ENCODE measurements at regions of chr2 and their contacts with region 1.

Region 1: GRCh38 chr2:173965329-173966025 is at the start of gene SP3:
- DNase-seq: peak; percentile 95
- H3K4me3 Mint-ChIP-seq: peak within 1 kb of the TSS; percentile 86
- H3K27ac Mint-ChIP-seq: peak within 1 kb of the TSS; percentile 92
- H3K4me1 Mint-ChIP-seq: peaks cover 32% of the 10 kb centered on the region
- H3K27me3 Mint-ChIP-seq: no peaks in the 10 kb centered on the region
- total RNA-seq, gene SP3: 104 and 105 TPM in 2 replicates

Region 2: DNA sequence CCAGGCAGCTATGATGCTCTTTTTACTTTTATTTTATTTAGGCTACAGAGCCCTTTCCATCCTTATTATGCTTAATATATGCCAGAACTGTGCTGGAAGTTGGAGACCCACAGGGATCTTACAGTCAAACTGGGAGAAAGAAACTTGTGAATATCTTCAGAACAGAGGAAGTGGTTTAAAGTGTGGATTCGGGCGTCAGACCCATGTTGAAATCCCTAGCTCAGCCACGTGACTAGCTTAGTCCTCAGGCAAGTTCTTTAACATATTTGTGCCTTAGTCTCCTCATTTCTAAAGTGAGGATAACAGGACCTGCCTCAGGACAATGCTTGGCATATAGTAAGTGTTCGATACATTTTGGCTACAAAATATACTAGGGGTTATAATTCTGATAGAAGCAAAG is 830.8 kb before region 1 on chr2:
- intact Hi-C with region 1: loop called (anchors 10 kb)
- DNase-seq: no peak
- H3K4me3 Mint-ChIP-seq: no peak overlapping the region
- H3K27ac Mint-ChIP-seq: peak overlapping the region; percentile 74
- H3K4me1 Mint-ChIP-seq: peaks cover 73% of the 10 kb centered on the region
- H3K27me3 Mint-ChIP-seq: peaks cover 5% of the 10 kb centered on the region

Region 3: DNA sequence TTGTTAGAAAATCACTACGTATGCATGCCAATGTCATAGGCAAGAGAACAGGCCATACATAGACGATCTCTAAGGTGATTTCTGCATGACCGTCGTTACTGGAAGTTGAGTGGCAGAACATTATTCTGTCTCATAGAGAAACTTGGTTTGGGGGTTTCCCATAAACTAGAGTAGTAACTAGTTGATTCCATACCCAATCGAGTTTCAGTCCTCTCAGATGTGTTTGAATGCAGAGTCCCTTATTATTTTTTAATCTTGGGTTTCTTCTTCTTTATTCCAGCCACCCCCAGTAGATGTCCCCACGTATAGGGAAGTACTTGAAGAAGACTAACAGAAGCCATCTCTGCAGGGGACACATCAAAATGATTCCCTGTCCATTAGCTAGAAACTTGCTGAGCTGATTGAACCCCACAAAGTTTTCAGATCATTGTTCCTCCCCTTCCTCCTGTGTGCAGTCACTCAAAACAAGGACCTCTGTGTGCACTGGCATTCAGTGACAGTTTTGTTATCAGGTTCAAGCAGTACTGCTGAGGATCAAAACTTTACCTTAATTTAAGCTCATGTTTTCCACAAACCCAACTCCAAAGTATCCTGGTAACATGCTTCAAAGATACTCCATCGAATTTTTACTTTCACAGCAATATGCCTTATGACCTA is 679.2 kb before region 1 on chr2:
- intact Hi-C with region 1: no loop called
- DNase-seq: no peak
- H3K4me3 Mint-ChIP-seq: no peak overlapping the region
- H3K27ac Mint-ChIP-seq: peak overlapping the region; percentile 35
- H3K4me1 Mint-ChIP-seq: peaks cover 19% of the 10 kb centered on the region
- H3K27me3 Mint-ChIP-seq: peaks cover 2% of the 10 kb centered on the region

Region 4: DNA sequence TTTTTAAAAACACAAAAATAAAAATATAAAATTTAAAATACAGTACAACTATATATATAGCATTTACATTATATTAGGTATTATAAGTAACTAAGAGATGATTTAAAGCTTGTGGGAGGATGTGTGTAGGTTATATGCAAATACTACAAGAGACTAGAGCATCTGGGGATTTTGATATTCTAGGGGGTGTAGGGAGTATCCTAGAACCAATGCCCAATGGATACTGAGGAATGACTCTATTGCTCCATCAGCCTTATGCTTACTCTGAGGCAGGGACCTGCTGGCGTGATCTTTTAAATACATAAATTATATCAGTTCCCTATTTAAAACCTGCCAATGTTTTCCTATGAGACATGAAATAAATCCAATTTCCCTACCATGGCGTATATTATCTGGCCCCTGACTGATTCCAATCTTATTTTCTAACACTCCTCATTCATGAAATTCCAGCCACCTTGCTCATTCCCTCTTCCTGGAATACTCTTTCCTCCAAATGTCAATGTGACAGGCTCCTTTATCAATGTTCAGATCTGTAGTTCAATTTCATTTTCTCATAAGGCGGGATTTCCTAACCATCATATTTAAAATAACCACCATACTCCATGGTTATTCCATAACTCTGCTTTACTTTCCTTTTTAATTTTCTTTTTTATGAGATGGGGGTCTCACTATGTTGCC is 22.5 kb before region 1 on chr2:
- intact Hi-C with region 1: loop called (anchors 2 kb)
- DNase-seq: no peak
- H3K4me3 Mint-ChIP-seq: no peak overlapping the region
- H3K27ac Mint-ChIP-seq: peak overlapping the region; percentile 65
- H3K4me1 Mint-ChIP-seq: peaks cover 65% of the 10 kb centered on the region
- H3K27me3 Mint-ChIP-seq: no peaks in the 10 kb centered on the region

Region 5: GRCh38 chr2:173953047-173953424 is 12.4 kb before region 1 on chr2:
- intact Hi-C with region 1: no loop called
- DNase-seq: no peak
- H3K4me3 Mint-ChIP-seq: no peak overlapping the region
- H3K27ac Mint-ChIP-seq: no peak overlapping the region
- H3K4me1 Mint-ChIP-seq: peaks cover 62% of the 10 kb centered on the region
- H3K27me3 Mint-ChIP-seq: no peaks in the 10 kb centered on the region

Region 6: GRCh38 chr2:174039551-174040416 is 74.3 kb after region 1 on chr2:
- intact Hi-C with region 1: loop called (anchors 1 kb)
- DNase-seq: peak; percentile 74
- H3K4me3 Mint-ChIP-seq: peak overlapping the region; percentile 30
- H3K27ac Mint-ChIP-seq: peak overlapping the region; percentile 88
- H3K4me1 Mint-ChIP-seq: peaks cover 22% of the 10 kb centered on the region
- H3K27me3 Mint-ChIP-seq: no peaks in the 10 kb centered on the region

Region 7: DNA sequence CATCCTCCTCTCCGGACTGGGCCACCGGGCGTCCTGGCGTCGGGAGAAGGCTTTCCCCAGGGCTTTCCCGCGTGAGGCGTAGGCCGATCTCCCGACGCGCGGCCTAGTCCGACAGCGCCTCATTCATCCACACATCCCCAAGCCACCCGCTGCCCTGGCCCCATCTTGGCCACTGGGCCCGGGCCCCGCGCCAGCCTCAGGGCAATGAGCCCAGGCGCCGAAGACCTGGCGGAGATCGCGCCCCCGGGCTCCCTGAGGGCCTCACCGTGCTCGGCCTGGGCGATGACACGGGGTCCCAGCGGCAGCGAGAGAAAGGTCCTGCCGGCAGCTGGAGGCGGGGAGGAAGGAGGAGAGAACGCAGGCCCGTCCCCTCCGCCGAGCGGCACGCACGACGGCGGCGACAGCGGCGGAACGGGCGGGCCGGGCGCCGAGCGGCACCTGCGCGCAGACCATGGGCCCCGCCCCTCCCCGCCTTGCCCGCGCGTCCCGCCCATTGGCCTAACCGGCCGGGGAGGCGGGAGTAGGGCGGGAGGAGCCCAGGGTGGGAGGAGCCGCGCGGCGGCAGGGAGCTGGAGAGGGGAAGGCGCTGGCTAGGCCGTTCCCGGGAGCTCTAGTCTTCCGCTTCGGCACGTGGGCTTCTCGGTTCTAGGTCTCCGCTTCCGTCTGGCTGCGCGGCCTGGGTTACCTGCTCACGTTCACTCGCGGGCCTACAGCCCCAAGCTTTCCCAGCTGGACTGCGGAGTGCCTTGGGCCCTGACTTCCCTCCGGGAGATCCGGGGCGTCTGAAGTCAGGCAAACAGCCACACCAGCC is 282.9 kb after region 1 on chr2 and contains the start of gene OLA1:
- intact Hi-C with region 1: loop called (anchors 5 kb)
- DNase-seq: peak; percentile 94
- H3K4me3 Mint-ChIP-seq: peak within 1 kb of the TSS; percentile 87
- H3K27ac Mint-ChIP-seq: peak within 1 kb of the TSS; percentile 86
- H3K4me1 Mint-ChIP-seq: peaks cover 29% of the 10 kb centered on the region
- H3K27me3 Mint-ChIP-seq: no peaks in the 10 kb centered on the region
- total RNA-seq, gene OLA1: 148 and 150 TPM in 2 replicates

Region 8: DNA sequence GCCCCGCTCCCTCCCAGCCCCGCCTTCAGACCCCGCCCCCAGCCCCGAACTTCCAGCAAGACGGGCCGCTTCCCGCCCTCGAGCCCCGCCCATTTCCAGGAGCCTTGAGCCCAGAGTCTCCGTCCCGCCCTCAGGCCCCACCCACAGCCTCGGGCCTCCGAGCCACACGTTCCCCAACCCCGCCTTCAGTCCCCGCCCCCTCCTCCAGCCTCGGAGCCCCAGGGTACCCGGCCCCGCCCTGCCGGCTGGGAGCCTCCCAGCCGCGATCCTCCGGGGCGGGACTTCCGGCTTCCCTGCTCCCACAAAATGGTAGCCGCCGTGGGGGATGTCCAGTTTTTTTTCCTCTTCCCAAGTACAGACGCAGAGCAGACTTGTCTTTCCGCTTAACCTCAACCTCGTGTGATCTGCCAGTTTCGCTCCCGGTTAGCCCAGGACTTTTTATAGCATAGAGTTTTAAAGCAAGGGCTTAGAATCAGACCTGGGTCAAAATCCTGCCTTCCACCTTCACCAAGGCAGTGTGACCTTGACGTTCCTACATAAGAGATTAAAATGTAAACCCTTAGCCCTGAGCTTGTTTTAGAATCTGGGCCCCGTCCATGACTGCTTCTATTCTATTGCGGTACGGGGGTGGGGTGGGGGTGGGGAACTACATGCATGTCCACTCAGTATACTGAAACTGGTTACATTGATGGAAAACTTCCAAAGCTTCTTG is 521.8 kb after region 1 on chr2:
- intact Hi-C with region 1: loop called (anchors 10 kb)
- DNase-seq: peak; percentile 85
- H3K4me3 Mint-ChIP-seq: peak overlapping the region; percentile 87
- H3K27ac Mint-ChIP-seq: peak overlapping the region; percentile 79
- H3K4me1 Mint-ChIP-seq: peaks cover 52% of the 10 kb centered on the region
- H3K27me3 Mint-ChIP-seq: peaks cover 7% of the 10 kb centered on the region

Measured in activated T-helper 2 cell treated with anti-CD3 and anti-CD28 coated beads, Interferon-gamma antibody, Interleukin-2, Interleukin-4, amounts not matched to agents 10 μg/mL and 5 μg/mL and 100 μg/mL, durations not matched to agents 14 hours and 24 hours and 36 hours (primary cell).